Heart right ventricle (tissue), 16 donors: ENCODE measurements at regions of chr17 and their contacts with region 1.

Region 1: DNA sequence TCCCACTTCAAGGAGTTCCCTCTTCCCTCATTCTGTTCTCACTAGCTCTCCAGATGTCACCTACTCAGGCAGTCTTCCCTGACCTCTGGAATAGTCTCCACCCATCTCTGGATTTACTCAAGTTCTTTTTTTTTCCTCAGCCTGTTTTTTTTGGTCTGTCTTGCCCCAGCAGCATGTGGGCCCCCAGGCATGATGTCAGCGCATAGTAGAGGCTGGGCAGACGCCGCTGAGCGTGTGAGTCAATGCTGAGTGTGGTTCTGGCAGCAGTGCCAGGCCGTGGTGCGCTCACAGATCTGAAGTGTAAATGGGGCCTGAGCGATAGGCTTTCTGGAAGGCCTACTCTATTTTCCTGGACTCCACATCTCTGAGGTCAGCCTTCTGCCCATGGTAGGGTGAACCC is 2.7 kb upstream of the KCNJ18 start:
- DNase-seq: no peak
- ATAC-seq: peak in 6 of 8 donors; percentile 48 to 66 (median 56)
- H3K4me3 ChIP-seq: no peak overlapping the region
- H3K27ac ChIP-seq: no peak overlapping the region
- H3K4me1 ChIP-seq: no peaks in the 10 kb centered on the region
- H3K27me3 ChIP-seq: peaks cover 0 to 6% (median 0%) of the 10 kb centered on the region in 7 donors
- CTCF ChIP-seq: no peak

Region 2: GRCh38 chr17:21400816-21401593 is 288.6 kb before region 1 on chr17:
- intact Hi-C with region 1: loop called in 1 of 10 experiments (anchors 5 kb)
- DNase-seq: no peak
- ATAC-seq: no peak
- H3K4me3 ChIP-seq: no peak overlapping the region
- H3K27ac ChIP-seq: no peak overlapping the region
- H3K4me1 ChIP-seq: peaks cover 0 to 32% (median 14%) of the 10 kb centered on the region in 9 donors
- H3K27me3 ChIP-seq: no peaks in the 10 kb centered on the region
- CTCF ChIP-seq: no peak

Region 3: DNA sequence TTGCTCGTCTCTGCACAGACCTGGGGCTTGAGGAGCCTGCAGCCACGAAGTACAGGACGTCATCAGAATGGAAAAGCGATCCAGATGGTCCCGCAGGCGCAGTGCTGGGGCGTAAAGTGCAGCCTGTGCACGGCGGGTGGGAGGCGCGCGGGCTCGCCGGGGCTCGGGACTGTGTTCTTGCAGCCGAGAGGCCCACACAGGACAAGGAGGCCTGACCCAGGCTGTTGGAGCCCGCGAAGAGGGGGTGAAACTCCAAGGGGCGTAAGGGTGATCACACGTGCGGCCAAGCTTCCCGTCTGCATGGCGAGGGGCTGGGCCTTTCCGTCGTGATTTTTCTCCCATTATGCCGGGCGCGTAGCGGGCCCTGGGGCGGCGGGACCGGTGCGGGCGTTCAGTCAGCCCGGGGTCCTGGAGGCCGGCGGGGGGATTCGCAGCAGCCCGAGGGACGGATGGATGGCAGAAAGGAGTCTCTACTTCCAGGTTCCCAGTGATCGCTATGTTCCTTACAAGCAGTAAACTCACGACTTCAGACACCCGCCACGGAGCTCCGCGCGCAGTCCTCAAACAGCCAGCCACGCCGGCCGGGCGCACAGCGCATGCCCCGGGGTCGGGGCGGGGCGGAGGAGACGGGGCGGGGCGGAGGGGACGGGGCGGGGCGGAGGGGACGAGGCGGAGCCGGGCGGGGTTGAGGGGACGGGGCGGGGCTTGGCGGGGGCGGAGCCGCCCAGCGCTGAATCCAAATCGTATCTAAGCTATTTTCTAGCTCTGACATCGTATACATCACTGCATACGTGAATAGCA is 138.3 kb before region 1 on chr17:
- intact Hi-C with region 1: no loop called
- DNase-seq: peak; percentile 82 to 83
- ATAC-seq: peak; percentile 97 to 100 (median 98)
- H3K4me3 ChIP-seq: peak overlapping the region; percentile 59 to 88 (median 72)
- H3K27ac ChIP-seq: peak overlapping the region in 9 of 10 donors; percentile 68 to 87 (median 82)
- H3K4me1 ChIP-seq: peaks cover 0 to 38% (median 25%) of the 10 kb centered on the region in 9 donors
- H3K27me3 ChIP-seq: peaks cover 0 to 18% (median 0%) of the 10 kb centered on the region in 7 donors
- CTCF ChIP-seq: no peak

Region 4: GRCh38 chr17:21756856-21757619 is 67.4 kb after region 1 on chr17:
- intact Hi-C with region 1: no loop called
- DNase-seq: no peak
- ATAC-seq: no peak
- H3K4me3 ChIP-seq: no peak overlapping the region
- H3K27ac ChIP-seq: no peak overlapping the region
- H3K4me1 ChIP-seq: no peaks in the 10 kb centered on the region
- H3K27me3 ChIP-seq: no peaks in the 10 kb centered on the region
- CTCF ChIP-seq: no peak

Region 5: DNA sequence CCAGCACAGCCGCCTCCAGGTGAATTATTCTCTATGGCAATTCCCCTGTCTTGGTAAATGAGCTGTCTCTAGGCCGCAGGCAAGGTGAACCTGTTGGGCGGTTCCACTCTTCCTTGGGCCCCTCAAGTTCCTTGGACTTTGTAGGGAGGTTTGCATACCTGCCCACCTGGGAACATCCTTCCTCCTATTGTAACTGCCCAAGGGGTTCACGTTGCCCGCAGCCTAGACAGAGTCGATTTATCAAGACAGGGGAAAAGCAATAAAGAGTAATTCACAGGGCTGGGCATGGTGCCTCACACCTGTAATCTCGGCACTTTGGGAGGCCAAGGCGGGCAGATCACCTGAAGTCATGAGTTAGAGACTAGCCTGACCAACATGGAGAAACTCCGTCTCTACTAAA is 125.2 kb after region 1 on chr17:
- intact Hi-C with region 1: no loop called
- DNase-seq: no peak
- ATAC-seq: peak in 1 of 8 donors; percentile 38
- H3K4me3 ChIP-seq: no peak overlapping the region
- H3K27ac ChIP-seq: no peak overlapping the region
- H3K4me1 ChIP-seq: no peaks in the 10 kb centered on the region
- H3K27me3 ChIP-seq: peaks cover 0 to 31% (median 4%) of the 10 kb centered on the region in 7 donors
- CTCF ChIP-seq: no peak